OCI-LY7 (cell line): ENCODE measurements at regions of chr20 and their contacts with region 1.

Region 1: DNA sequence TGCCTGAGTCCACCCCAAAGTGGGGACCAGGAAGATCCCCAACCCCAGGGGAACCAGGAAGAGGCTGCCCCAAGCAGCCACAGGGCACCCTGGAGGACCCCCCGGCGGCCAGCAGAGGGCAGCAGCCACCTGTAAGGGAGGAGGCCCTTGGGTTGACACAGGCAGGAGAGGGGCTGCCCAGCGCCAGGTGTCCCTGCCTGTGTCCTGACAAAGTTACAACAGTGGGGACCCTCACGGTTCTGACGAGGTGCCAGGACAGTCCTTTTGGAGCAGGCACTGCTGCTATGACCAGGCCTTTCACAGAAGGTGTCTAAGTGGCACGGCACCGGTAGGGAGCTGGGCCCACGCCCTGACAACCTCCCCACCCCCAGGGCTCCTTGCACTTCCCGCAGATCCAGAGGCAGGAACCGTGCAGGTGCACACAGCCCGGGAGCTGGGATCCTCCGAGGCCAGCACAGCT is 176.7 kb downstream of the BMP7 start:
- DNase-seq: peak; percentile 80
- H3K4me3 ChIP-seq: no peak overlapping the region
- H3K27ac ChIP-seq: no peak overlapping the region
- H3K4me1 ChIP-seq: no peaks in the 10 kb centered on the region
- CTCF ChIP-seq: peak; percentile 90

Region 2: GRCh38 chr20:57244627-57245214 is 155.0 kb after region 1 on chr20:
- CTCF ChIA-PET with region 1: interaction called, 3 read pairs
- POLR2A ChIA-PET with region 1: no interaction called
- intact Hi-C with region 1: loop called (anchors 10 kb)
- DNase-seq: peak; percentile 94
- H3K4me3 ChIP-seq: peak overlapping the region; percentile 47
- H3K27ac ChIP-seq: peak overlapping the region; percentile 87
- H3K4me1 ChIP-seq: peaks cover 61% of the 10 kb centered on the region
- CTCF ChIP-seq: peak; percentile 63

Region 3: DNA sequence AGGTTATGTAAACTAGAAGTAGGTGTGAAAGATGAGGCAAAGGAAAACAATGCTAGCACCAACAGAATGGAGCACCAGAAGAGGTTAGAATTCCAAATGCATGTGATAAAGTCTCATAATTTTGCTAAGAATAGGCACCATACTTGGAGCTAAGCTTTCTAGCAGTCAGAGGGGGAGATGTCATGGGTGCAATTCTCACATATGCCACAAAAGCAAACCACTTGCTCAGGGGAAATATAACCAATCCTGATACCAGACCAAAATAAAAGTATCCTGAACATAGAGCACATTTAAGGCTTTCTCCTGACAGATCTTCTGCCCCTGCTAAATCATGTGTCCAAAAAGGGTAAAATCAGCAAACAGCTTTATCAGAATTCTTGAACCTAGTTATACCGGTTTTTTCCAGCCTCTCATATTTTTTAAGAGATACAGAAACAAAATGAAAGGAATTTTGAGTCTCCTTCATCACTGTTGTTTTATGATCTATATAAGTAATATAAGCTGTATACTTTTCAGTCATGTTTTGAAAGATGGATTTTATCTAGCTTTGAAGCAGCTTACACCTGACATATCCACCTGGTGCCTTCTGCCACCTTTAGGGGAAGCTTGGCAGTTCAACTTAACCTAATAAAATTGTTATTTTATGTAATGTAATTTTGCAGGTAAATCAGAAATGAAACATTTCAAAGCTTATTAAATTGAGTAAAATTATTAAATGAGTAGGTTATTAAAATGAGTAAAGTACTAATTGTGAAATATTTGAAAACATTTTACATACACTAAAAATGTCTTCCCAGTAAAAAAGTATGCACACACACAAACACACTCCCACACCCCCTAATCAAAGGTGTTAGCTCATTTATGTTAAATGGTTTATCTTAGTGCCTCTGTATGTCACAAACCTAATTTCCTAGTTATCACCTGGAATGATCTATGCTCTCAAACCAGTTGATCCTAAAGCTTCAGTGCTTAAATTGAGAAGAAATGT is 242.7 kb after region 1 on chr20:
- CTCF ChIA-PET with region 1: interaction called, 4 read pairs
- POLR2A ChIA-PET with region 1: no interaction called
- intact Hi-C with region 1: loop called (anchors 1 kb)
- DNase-seq: peak; percentile 65
- H3K4me3 ChIP-seq: no peak overlapping the region
- H3K27ac ChIP-seq: no peak overlapping the region
- H3K4me1 ChIP-seq: peaks cover 49% of the 10 kb centered on the region
- CTCF ChIP-seq: peak; percentile 98

Region 4: DNA sequence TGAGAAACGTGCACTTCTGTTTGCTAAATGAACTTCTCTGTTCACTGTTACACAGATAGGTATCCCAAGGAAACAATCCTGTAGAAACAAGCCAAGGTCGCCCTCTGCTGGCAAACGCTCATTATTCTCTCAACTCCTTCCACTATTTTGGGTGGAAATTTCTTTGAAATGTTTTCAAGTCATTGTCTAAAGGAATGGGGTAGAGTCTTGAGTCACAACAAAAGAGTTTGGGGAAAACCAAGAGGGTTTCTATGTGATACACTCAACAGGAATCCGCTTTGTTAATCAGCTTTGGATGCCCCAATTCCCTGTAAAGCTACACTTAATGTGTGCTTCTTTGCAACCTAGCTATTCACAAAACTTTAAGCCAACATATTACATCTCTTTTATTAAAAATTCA is 256.8 kb after region 1 on chr20:
- CTCF ChIA-PET with region 1: interaction called, 3 read pairs
- POLR2A ChIA-PET with region 1: no interaction called
- intact Hi-C with region 1: loop called (anchors 1 kb)
- DNase-seq: peak; percentile 83
- H3K4me3 ChIP-seq: no peak overlapping the region
- H3K27ac ChIP-seq: no peak overlapping the region
- H3K4me1 ChIP-seq: no peaks in the 10 kb centered on the region
- CTCF ChIP-seq: peak; percentile 98

Region 5: DNA sequence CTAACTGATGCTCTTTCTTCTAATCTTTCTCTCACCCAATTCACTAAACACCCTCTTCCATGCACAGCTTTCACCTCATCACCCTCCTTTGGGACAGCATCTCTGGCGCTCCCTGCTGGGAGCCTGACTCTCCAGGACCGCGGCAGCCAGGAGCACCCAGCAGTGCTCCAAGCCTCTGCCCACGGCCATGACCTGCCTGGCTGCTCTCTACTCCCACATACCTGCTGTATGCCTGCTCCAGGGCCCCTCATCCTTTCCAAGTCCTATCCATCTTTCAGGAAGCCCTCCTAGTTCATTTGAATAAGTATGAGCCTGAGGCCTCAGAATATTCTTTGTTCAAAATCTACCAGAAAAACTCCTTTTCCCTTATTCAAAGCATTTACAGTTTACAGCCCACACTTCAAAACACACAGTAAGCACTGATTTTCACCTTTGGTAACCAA is 420.0 kb after region 1 on chr20:
- CTCF ChIA-PET with region 1: no interaction called
- POLR2A ChIA-PET with region 1: no interaction called
- intact Hi-C with region 1: loop called (anchors 10 kb)
- DNase-seq: peak; percentile 37
- H3K4me3 ChIP-seq: no peak overlapping the region
- H3K27ac ChIP-seq: no peak overlapping the region
- H3K4me1 ChIP-seq: peaks cover under 1% of the 10 kb centered on the region
- CTCF ChIP-seq: peak; percentile 73